ENCODE measurements at regions of chr21 and their contacts with region 1.

Region 1: DNA sequence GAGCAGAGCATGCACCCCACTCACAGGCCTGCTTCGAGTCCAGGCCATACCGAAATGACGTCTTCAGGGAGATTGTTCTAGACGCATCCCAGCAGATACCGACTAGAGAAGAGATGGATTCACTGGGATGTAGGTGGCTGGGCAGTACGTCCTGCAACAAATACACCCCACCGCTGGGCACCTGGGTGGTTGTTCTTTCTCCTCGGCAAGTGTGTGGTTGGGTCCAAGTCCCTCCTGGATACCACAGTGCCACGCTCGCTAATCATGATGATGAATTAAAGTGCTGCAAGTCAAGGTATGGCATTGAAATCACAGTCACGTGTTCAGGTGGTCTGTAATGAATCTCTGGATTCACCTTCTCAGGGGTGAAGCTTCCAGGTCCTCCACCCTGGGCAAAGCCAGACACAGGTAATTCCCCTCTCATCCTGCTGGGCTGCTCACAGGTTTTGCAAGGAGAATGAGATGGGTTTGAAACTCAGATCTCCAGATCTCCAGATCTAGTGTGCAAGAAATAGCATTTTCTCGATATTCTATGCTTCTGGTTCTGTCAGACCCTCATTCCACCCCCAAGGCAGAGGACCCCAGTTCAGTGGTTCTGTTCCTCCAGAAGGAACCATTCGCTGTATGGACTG is 45.7 kb downstream of the UBASH3A start:
- DNase-seq: no peak
- ATAC-seq: no peak
- H3K4me3 Mint-ChIP-seq: no peak overlapping the region
- H3K27ac Mint-ChIP-seq: peak overlapping the region; percentile 84
- H3K4me1 Mint-ChIP-seq: peaks cover 57% of the 10 kb centered on the region
- H3K27me3 Mint-ChIP-seq: no peaks in the 10 kb centered on the region
- CTCF ChIP-seq: no peak

Region 2: GRCh38 chr21:42360317-42360716 is 89.1 kb before region 1 on chr21:
- CTCF ChIA-PET with region 1: interaction called, 23 read pairs
- POLR2A ChIA-PET with region 1: interaction called, 3 read pairs
- intact Hi-C with region 1: no loop called
- DNase-seq: peak; percentile 55
- ATAC-seq: peak; percentile 65
- H3K4me3 Mint-ChIP-seq: no peak overlapping the region
- H3K27ac Mint-ChIP-seq: no peak overlapping the region
- H3K4me1 Mint-ChIP-seq: peaks cover 7% of the 10 kb centered on the region
- H3K27me3 Mint-ChIP-seq: no peaks in the 10 kb centered on the region
- CTCF ChIP-seq: peak; percentile 45

Region 3: GRCh38 chr21:42544544-42544943 is 95.1 kb after region 1 on chr21:
- CTCF ChIA-PET with region 1: no interaction called
- POLR2A ChIA-PET with region 1: no interaction called
- intact Hi-C with region 1: no loop called
- DNase-seq: no peak
- ATAC-seq: no peak
- H3K4me3 Mint-ChIP-seq: no peak overlapping the region
- H3K27ac Mint-ChIP-seq: no peak overlapping the region
- H3K4me1 Mint-ChIP-seq: peaks cover 2% of the 10 kb centered on the region
- H3K27me3 Mint-ChIP-seq: no peaks in the 10 kb centered on the region
- CTCF ChIP-seq: no peak

Region 4: GRCh38 chr21:42674351-42674940 is 225.0 kb after region 1 on chr21:
- CTCF ChIA-PET with region 1: no interaction called
- POLR2A ChIA-PET with region 1: no interaction called
- intact Hi-C with region 1: no loop called
- DNase-seq: no peak
- ATAC-seq: no peak
- H3K4me3 Mint-ChIP-seq: no peak overlapping the region
- H3K27ac Mint-ChIP-seq: no peak overlapping the region
- H3K4me1 Mint-ChIP-seq: peaks cover 13% of the 10 kb centered on the region
- H3K27me3 Mint-ChIP-seq: no peaks in the 10 kb centered on the region
- CTCF ChIP-seq: no peak

Measured in activated CD8-positive, alpha-beta T cell treated with anti-CD3 and anti-CD28 coated beads for 36 hours (primary cell).